PC-9 (cell line): ENCODE measurements at regions of chr3 and their contacts with region 1.

Region 1: GRCh38 chr3:132029182-132029902 is 5.5 kb downstream of the CPNE4 start:
- DNase-seq: peak; percentile 87
- H3K4me3 ChIP-seq: no peak overlapping the region
- H3K27ac ChIP-seq: no peak overlapping the region
- H3K4me1 ChIP-seq: peaks cover 6% of the 10 kb centered on the region; the same call in 1 of the 2 replicates
- H3K27me3 ChIP-seq: no peaks in the 10 kb centered on the region
- CTCF ChIP-seq: peak; percentile 86

Region 2: GRCh38 chr3:131033480-131034080 is 995.8 kb before region 1 on chr3:
- CTCF ChIA-PET with region 1: interaction called, 6 read pairs
- POLR2A ChIA-PET with region 1: no interaction called
- intact Hi-C with region 1: loop called (anchors 1 kb)
- DNase-seq: peak; percentile 9 to 51
- H3K4me3 ChIP-seq: no peak overlapping the region
- H3K27ac ChIP-seq: no peak overlapping the region
- H3K4me1 ChIP-seq: no peaks in the 10 kb centered on the region
- H3K27me3 ChIP-seq: no peaks in the 10 kb centered on the region
- CTCF ChIP-seq: peak; percentile 86

Region 3: DNA sequence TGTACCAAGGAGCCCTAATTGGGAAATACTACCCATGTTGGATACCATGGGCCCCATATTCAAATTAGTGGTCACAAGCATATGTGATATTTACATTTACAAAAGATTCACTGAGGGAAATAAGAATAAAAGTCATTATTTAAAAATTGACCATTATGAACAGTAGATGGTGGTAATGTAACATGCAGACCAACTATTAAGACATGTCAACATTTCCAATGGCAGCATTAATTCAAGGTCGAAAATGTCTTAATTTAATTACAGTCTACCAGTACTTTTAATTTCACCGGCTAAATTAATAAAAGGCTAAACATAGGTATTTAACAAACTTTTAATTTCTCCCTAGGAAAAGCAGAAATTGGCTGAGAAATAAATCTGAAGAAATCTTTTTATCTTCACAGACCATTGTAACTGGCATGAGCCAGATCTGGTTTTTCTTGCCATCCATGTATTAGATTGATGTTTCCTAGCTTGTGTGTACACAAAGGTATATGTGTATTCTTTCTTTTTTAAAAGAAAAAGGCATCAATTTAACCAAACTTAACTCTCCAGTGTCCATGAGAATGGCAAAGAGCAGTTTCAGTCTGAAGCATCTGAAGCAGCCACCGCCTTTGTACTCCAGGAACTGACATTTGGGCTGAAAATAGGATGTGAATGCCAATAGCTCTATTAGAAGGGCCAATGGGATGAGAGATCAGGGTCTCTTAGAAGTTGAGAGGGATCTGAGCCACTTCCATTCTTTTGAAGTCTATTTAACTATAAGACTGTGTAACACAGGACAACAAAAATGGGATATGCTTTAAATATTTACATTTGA is 976.1 kb before region 1 on chr3:
- CTCF ChIA-PET with region 1: interaction called, 7 read pairs
- POLR2A ChIA-PET with region 1: no interaction called
- intact Hi-C with region 1: loop called (anchors 1 kb)
- DNase-seq: no peak
- H3K4me3 ChIP-seq: no peak overlapping the region
- H3K27ac ChIP-seq: no peak overlapping the region
- H3K4me1 ChIP-seq: no peaks in the 10 kb centered on the region
- H3K27me3 ChIP-seq: no peaks in the 10 kb centered on the region
- CTCF ChIP-seq: peak; percentile 61

Region 4: GRCh38 chr3:131231710-131232389 is 797.5 kb before region 1 on chr3:
- CTCF ChIA-PET with region 1: no interaction called
- POLR2A ChIA-PET with region 1: no interaction called
- intact Hi-C with region 1: loop called (anchors 10 kb)
- DNase-seq: no peak
- H3K4me3 ChIP-seq: no peak overlapping the region
- H3K27ac ChIP-seq: no peak overlapping the region
- H3K4me1 ChIP-seq: no peaks in the 10 kb centered on the region
- H3K27me3 ChIP-seq: no peaks in the 10 kb centered on the region
- CTCF ChIP-seq: 0 out of 2 replicates have a peak, but pooled peaks have one; percentile 25

Region 5: GRCh38 chr3:131794766-131795388 is 234.5 kb before region 1 on chr3:
- CTCF ChIA-PET with region 1: interaction called, 3 read pairs
- POLR2A ChIA-PET with region 1: no interaction called
- intact Hi-C with region 1: loop called (anchors 1 kb)
- DNase-seq: peak; percentile 32 to 44
- H3K4me3 ChIP-seq: no peak overlapping the region
- H3K27ac ChIP-seq: no peak overlapping the region
- H3K4me1 ChIP-seq: peaks cover 8% of the 10 kb centered on the region
- H3K27me3 ChIP-seq: no peaks in the 10 kb centered on the region
- CTCF ChIP-seq: peak; percentile 87

Region 6: DNA sequence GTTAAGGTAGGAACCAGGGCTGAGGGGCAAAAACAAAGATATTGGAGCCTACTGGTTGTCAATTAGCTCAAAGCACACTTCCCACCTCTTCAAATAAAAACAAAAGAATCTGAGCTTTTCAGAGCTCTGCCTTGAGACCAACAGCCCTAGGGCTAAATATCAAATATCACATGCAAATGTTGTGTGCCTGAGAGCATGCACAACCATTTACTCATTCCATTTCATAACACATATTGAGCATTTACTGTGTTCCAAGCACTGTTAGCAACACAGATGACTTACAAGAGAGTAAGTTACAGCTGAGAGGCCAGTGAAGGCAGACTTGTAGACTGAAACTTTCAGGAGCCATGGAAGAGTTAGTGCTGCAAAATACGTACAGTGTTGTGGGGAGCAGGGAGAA is 216.9 kb before region 1 on chr3:
- CTCF ChIA-PET with region 1: no interaction called
- POLR2A ChIA-PET with region 1: no interaction called
- intact Hi-C with region 1: loop called (anchors 5 kb)
- DNase-seq: peak in 1 of 2 experiments; percentile 66
- H3K4me3 ChIP-seq: no peak overlapping the region
- H3K27ac ChIP-seq: no peak overlapping the region
- H3K4me1 ChIP-seq: peaks cover 11% of the 10 kb centered on the region
- H3K27me3 ChIP-seq: no peaks in the 10 kb centered on the region
- CTCF ChIP-seq: no peak

Region 7: GRCh38 chr3:131925571-131925970 is 103.8 kb before region 1 on chr3:
- CTCF ChIA-PET with region 1: no interaction called
- POLR2A ChIA-PET with region 1: no interaction called
- intact Hi-C with region 1: no loop called
- DNase-seq: no peak
- H3K4me3 ChIP-seq: no peak overlapping the region
- H3K27ac ChIP-seq: no peak overlapping the region
- H3K4me1 ChIP-seq: no peaks in the 10 kb centered on the region
- H3K27me3 ChIP-seq: no peaks in the 10 kb centered on the region
- CTCF ChIP-seq: no peak

Region 8: GRCh38 chr3:132006605-132007204 is 22.6 kb before region 1 on chr3:
- CTCF ChIA-PET with region 1: interaction called, 3 read pairs
- POLR2A ChIA-PET with region 1: no interaction called
- intact Hi-C with region 1: loop called (anchors 2 kb)
- DNase-seq: peak in 1 of 2 experiments; percentile 33
- H3K4me3 ChIP-seq: no peak overlapping the region
- H3K27ac ChIP-seq: no peak overlapping the region
- H3K4me1 ChIP-seq: peaks cover 40% of the 10 kb centered on the region
- H3K27me3 ChIP-seq: no peaks in the 10 kb centered on the region
- CTCF ChIP-seq: peak; percentile 70

Region 9: DNA sequence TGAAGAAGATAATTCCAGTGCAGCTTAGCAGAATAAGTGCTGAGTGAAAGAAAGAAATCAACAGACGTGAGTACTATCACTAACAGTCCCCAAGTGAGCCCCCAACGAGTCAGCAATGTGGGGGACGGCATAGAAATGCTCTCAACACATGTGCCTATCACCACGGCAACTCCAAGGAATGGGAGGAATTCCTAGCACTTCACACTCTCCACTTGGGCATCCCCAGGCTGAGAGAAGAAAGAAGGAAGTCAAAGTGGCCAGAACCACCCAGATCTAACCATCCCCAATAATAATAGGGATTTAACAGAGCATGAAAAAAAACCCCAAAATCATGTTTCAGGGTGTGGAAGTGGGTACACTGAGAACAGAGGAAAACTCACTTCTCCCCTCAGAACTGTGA is 34.8 kb after region 1 on chr3:
- CTCF ChIA-PET with region 1: no interaction called
- POLR2A ChIA-PET with region 1: no interaction called
- intact Hi-C with region 1: no loop called
- DNase-seq: no peak
- H3K4me3 ChIP-seq: no peak overlapping the region
- H3K27ac ChIP-seq: no peak overlapping the region
- H3K4me1 ChIP-seq: no peaks in the 10 kb centered on the region
- H3K27me3 ChIP-seq: no peaks in the 10 kb centered on the region
- CTCF ChIP-seq: no peak

Region 10: GRCh38 chr3:133230195-133230594 is 1200.9 kb after region 1 on chr3:
- CTCF ChIA-PET with region 1: no interaction called
- POLR2A ChIA-PET with region 1: no interaction called
- intact Hi-C with region 1: no loop called
- DNase-seq: no peak
- H3K4me3 ChIP-seq: no peak overlapping the region
- H3K27ac ChIP-seq: no peak overlapping the region
- H3K4me1 ChIP-seq: no peaks in the 10 kb centered on the region
- H3K27me3 ChIP-seq: no peaks in the 10 kb centered on the region
- CTCF ChIP-seq: no peak